Tibial artery (tissue), 4 donors: ENCODE measurements at regions of chr22 and their contacts with region 1.

Region 1: DNA sequence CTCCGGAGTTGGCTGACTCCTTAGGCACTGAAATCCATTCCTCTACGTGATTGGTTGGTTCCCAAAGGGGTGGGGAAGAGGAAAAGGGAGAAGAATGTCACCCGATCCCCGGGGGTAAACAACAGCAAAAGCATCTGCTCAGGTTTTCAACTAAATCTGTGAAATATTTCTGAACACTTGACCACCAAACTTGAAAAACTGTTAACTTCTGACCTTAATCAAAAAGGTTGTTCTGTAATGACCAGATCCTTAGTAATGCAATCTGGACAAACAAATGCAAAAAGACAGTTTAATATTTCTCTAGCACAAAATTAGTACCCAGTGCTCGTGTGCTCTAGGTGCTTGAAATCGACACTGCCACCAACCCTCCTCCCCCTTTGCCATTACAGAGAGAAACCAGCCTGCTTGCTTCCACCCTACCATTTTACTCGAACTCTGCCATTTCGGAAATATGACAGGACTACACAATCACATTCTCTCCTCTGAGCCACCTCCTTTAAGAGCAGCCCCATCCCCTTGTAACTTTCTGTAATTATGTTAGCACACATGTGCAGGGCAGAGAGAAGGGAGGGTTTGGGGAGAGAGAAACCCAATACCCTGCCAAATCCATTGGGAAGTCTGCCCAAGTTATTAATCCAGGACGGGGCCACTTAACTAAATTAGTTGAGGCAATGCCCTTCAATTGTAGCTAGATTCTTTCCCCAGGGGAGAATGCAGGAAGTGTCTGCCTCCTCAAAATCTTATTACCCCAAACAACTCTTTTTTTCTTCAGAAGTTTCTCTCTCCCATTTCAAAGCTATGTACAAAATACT is 113.8 kb downstream of the RBFOX2 start:
- DNase-seq: peak; percentile 73 to 76
- H3K4me3 ChIP-seq: peak overlapping the region; percentile 46 to 59
- H3K27ac ChIP-seq: peak overlapping the region; percentile 72 to 79
- H3K4me1 ChIP-seq: peaks cover 0 to 68% (median 34%) of the 10 kb centered on the region in 4 donors
- H3K27me3 ChIP-seq: no peaks in the 10 kb centered on the region
- CTCF ChIP-seq: no peak

Region 2: GRCh38 chr22:35627264-35628041 is 287.4 kb before region 1 on chr22:
- intact Hi-C with region 1: loop called (anchors 5 kb)
- DNase-seq: peak; percentile 87 to 91
- H3K4me3 ChIP-seq: peak overlapping the region; percentile 56 to 73
- H3K27ac ChIP-seq: peak overlapping the region; percentile 82 to 88
- H3K4me1 ChIP-seq: peaks cover 0 to 38% (median 25%) of the 10 kb centered on the region in 4 donors
- H3K27me3 ChIP-seq: no peaks in the 10 kb centered on the region
- CTCF ChIP-seq: peak; percentile 42 to 60

Region 3: GRCh38 chr22:35761037-35761436 is 153.8 kb before region 1 on chr22:
- intact Hi-C with region 1: loop called (anchors 10 kb)
- DNase-seq: no peak
- H3K4me3 ChIP-seq: no peak overlapping the region
- H3K27ac ChIP-seq: no peak overlapping the region
- H3K4me1 ChIP-seq: no peaks in the 10 kb centered on the region
- H3K27me3 ChIP-seq: no peaks in the 10 kb centered on the region
- CTCF ChIP-seq: peak in 1 of 2 experiments; percentile 34

Region 4: GRCh38 chr22:35930933-35931332 is 16.1 kb after region 1 on chr22:
- intact Hi-C with region 1: no loop called
- DNase-seq: no peak
- H3K4me3 ChIP-seq: no peak overlapping the region
- H3K27ac ChIP-seq: no peak overlapping the region
- H3K4me1 ChIP-seq: peaks cover 0 to 8% (median 0%) of the 10 kb centered on the region in 4 donors
- H3K27me3 ChIP-seq: no peaks in the 10 kb centered on the region
- CTCF ChIP-seq: peak; percentile 60 to 75